PC-3 (cell line): ENCODE measurements at regions of chr18 and their contacts with region 1.

Region 1: DNA sequence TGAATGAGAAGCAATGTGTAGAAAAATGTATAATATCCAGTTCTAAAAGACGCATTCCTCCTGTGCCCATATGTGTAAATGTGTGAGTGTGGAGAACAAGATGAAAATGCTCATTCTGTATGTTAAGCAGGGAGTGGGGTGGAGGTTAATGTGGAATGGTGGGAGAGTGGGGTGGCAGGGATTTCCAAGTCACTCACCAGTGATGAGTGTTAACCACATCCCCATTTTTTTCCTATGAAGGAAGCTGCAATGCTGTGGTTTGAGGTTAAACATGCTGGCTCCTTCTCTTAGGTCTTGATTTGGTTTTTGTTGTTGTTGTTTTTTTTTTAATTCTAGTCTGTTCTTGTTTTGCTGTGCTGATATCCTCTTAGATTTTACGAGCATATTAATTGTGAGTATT is 169.4 kb downstream of the NEDD4L start:
- DNase-seq: peak; percentile 84
- ATAC-seq: peak; percentile 49
- H3K4me3 ChIP-seq: no peak overlapping the region
- H3K27ac ChIP-seq: peak overlapping the region; percentile 41
- H3K4me1 ChIP-seq: peaks cover 82% of the 10 kb centered on the region
- H3K27me3 ChIP-seq: no peaks in the 10 kb centered on the region
- CTCF ChIP-seq: no peak

Region 2: GRCh38 chr18:58186258-58186948 is 27.0 kb before region 1 on chr18:
- CTCF ChIA-PET with region 1: no interaction called
- POLR2A ChIA-PET with region 1: no interaction called
- intact Hi-C with region 1: loop called (anchors 2 kb)
- DNase-seq: peak; percentile 89
- ATAC-seq: peak; percentile 88
- H3K4me3 ChIP-seq: peak overlapping the region; percentile 16; the same call in 1 of the 2 replicates
- H3K27ac ChIP-seq: peak overlapping the region; percentile 80
- H3K4me1 ChIP-seq: peaks cover 56% of the 10 kb centered on the region
- H3K27me3 ChIP-seq: no peaks in the 10 kb centered on the region
- CTCF ChIP-seq: no peak

Region 3: DNA sequence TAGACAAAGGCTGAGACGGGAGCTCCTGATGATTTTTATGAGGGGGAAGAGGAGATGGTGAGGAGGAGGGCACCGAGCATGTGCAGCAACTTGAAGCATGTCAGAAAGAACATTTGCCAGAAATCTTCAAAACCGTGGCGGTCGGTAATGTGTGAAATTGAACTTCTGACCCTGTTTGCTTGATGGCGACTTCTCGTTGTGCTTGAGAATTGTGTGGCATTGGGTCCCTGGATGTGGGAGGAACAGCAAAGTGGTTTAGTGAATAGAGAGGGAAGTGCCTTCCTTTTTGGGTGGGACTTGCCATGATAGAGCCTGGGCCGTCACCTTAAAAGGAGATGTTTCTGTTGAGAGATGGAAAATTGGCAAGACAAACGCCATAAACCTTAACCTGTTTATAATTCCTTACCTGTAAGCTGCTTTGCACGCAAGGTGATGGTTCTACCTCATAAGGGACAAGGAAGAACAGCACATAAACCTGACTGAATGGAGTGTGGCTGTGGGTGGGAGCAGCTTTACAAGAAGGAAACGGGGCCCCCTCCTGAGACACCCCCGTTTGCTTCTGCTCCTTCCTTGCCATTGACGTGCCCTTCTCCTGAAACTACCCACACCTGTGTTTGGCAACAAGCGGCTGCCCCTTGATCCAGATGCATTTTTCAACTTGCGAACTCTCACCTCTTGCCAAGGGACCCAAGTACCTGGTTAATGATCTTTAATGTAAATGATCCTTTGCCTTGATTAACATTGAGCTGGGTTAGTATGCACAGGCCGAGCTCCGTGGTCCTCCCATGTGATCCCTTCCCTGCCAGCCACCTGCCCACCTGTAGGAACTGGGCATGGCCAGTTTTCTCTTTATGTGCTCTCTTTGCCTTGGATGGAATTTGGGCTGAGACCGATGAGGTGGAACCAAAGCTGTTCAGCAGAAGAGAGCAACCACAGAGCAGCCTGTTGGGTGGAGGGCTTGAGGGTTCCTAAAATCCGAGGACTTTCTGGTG is 16.3 kb before region 1 on chr18:
- CTCF ChIA-PET with region 1: no interaction called
- POLR2A ChIA-PET with region 1: interaction called, 12 read pairs
- intact Hi-C with region 1: loop called (anchors 1 kb)
- DNase-seq: no peak
- ATAC-seq: no peak
- H3K4me3 ChIP-seq: no peak overlapping the region
- H3K27ac ChIP-seq: peak overlapping the region; percentile 59; the same call in 1 of the 2 replicates
- H3K4me1 ChIP-seq: peaks cover 34% of the 10 kb centered on the region
- H3K27me3 ChIP-seq: no peaks in the 10 kb centered on the region
- CTCF ChIP-seq: no peak

Region 4: GRCh38 chr18:58202406-58202730 is 11.1 kb before region 1 on chr18:
- CTCF ChIA-PET with region 1: no interaction called
- POLR2A ChIA-PET with region 1: interaction called, 12 read pairs
- intact Hi-C with region 1: no loop called
- DNase-seq: peak; percentile 78
- ATAC-seq: peak; percentile 96
- H3K4me3 ChIP-seq: no peak overlapping the region
- H3K27ac ChIP-seq: peak overlapping the region; percentile 54
- H3K4me1 ChIP-seq: peaks cover 18% of the 10 kb centered on the region
- H3K27me3 ChIP-seq: no peaks in the 10 kb centered on the region
- CTCF ChIP-seq: no peak

Region 5: DNA sequence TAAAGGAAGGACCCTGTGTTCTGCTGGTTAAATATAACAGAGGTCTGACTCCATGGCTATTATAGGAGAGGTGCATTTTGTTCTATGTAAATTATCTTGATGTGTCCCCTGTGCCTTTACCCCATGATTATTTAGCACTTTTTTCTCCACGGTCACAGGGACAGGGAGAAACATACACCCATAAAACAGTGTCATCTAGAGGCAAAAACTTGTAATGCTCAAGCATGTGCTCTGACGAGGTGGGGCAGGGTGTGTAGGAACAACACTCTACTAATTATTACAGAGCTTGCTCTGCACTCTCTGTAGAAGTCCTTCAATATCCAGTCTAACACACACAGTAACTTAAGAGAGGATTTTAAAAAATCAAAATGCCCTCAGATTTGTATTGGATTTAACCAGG is 18.5 kb after region 1 on chr18:
- CTCF ChIA-PET with region 1: no interaction called
- POLR2A ChIA-PET with region 1: no interaction called
- intact Hi-C with region 1: no loop called
- DNase-seq: peak; percentile 21
- ATAC-seq: no peak
- H3K4me3 ChIP-seq: no peak overlapping the region
- H3K27ac ChIP-seq: no peak overlapping the region
- H3K4me1 ChIP-seq: peaks cover 32% of the 10 kb centered on the region
- H3K27me3 ChIP-seq: no peaks in the 10 kb centered on the region
- CTCF ChIP-seq: peak; percentile 56